ENCODE measurements at regions of chr2 and their contacts with region 1.

Region 1: GRCh38 chr2:70964596-70965386 is 13.6 kb upstream of the ANKRD53 start:
- DNase-seq: peak; percentile 95
- H3K4me3 Mint-ChIP-seq: peak overlapping the region; percentile 90
- H3K27ac Mint-ChIP-seq: no peak overlapping the region
- H3K4me1 Mint-ChIP-seq: peaks cover 7% of the 10 kb centered on the region
- H3K27me3 Mint-ChIP-seq: peaks cover 37% of the 10 kb centered on the region

Region 2: DNA sequence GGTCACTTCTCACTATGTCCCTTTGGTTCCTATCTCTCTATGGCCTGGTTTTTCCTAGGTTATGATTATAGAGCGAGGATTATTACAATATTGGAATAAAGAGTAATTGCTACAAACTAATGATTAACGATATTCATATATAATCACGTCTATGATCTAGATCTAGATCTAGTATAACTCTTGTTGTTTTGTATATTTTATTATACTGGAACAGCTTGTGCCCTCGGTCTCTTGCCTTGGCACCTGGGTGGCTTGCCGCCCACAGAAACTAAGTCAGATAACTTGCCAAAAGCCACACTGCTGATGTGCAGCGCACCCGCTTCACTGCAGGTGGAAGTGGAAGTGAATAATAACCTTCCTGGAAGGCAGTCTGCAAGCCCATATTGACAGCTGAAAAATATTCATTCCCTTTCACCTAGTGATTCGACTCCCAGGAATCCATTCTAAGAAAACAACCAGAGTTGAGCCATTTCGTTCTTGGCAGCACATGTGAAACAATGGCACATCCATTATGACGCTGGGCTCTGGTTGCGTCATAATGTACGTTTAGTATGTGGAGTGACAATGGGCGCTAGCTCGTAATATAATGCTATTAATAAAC is 12.9 kb after region 1 on chr2:
- intact Hi-C with region 1: loop called (anchors 1 kb)
- DNase-seq: peak; percentile 73
- H3K4me3 Mint-ChIP-seq: peak overlapping the region; percentile 79
- H3K27ac Mint-ChIP-seq: peak overlapping the region; percentile 54
- H3K4me1 Mint-ChIP-seq: peaks cover 12% of the 10 kb centered on the region
- H3K27me3 Mint-ChIP-seq: peaks cover 21% of the 10 kb centered on the region

Region 3: DNA sequence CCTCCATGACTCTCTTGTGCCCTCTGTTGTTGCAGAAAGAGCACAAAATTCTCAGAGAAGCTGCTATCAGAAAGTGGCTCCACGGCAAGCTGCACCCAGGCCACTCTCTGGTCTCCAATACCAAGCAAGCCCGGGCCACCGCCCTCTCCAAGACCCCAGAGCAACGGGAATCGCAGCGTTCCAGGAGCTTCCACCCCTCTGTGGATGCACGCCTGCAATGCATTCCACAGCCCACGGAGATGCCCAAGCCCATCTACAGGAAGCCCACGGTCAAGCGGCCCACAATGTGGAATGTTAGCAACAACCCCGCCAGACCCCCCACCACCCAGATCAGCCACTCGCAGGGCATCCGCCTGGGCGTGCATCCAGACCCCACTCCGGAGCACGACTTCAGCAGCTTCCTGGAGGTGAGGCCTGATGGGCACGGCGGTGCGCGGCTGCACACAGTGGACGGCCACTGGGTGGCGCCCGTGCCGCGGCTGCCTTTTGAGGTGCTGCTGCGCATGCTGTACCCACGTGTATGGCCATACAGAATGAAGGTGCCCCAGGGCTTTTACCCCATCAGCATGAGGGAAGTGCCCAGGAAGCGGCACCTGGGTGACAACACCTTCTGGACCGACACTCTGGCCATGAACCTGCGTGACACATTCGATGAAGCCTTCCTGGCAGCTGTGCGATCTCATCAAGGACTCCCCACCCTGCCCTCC is 19.9 kb after region 1 on chr2:
- intact Hi-C with region 1: loop called (anchors 2 kb)
- DNase-seq: peak; percentile 95
- H3K4me3 Mint-ChIP-seq: peak overlapping the region; percentile 45
- H3K27ac Mint-ChIP-seq: no peak overlapping the region
- H3K4me1 Mint-ChIP-seq: peaks cover 12% of the 10 kb centered on the region
- H3K27me3 Mint-ChIP-seq: no peaks in the 10 kb centered on the region

Region 4: DNA sequence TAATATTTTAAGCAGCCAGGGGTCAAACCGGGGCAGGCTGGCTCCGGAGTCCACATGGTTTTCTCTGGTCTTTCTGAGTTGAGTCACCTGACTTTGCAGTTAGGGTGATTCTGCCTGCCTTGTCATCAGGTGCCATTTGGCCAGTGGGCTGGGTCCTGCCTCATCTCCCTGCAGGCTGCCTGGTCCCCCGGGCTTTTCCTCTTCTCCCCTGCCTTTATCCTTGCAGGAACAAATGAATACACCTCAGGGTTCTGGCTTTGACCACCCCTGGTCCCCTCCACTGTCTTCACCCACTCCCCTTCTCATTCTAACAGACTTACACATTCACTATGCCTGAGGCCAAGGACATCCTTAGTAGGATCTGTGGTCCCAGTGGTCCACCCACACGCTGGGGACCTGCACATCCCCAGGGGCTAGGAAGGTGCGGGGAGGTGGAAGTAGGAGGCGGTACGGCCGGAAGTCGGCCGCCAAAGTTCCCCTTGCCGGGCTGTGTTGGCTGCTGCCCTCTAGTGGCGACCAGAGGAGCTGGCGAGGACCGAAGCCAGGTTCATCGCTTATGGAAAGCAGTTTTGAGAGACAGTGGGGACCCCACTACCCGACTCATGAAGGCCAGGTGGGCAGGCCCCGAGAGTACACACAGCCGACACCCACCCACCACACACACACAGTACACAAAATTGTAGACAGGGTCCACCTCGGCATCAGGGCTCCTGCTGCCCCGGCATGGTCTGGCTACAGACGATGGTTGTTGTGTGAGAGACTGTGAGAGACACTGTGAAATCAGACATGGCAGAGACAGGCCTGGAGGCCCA is 36.2 kb after region 1 on chr2:
- intact Hi-C with region 1: loop called (anchors 1 kb)
- DNase-seq: peak; percentile 94
- H3K4me3 Mint-ChIP-seq: peak overlapping the region; percentile 76
- H3K27ac Mint-ChIP-seq: peak overlapping the region; percentile 83
- H3K4me1 Mint-ChIP-seq: peaks cover 19% of the 10 kb centered on the region
- H3K27me3 Mint-ChIP-seq: peaks cover 2% of the 10 kb centered on the region

Region 5: GRCh38 chr2:71122387-71123298 is 157.9 kb after region 1 on chr2:
- intact Hi-C with region 1: no loop called
- DNase-seq: no peak
- H3K4me3 Mint-ChIP-seq: no peak overlapping the region
- H3K27ac Mint-ChIP-seq: no peak overlapping the region
- H3K4me1 Mint-ChIP-seq: peaks cover 2% of the 10 kb centered on the region
- H3K27me3 Mint-ChIP-seq: no peaks in the 10 kb centered on the region

Region 6: DNA sequence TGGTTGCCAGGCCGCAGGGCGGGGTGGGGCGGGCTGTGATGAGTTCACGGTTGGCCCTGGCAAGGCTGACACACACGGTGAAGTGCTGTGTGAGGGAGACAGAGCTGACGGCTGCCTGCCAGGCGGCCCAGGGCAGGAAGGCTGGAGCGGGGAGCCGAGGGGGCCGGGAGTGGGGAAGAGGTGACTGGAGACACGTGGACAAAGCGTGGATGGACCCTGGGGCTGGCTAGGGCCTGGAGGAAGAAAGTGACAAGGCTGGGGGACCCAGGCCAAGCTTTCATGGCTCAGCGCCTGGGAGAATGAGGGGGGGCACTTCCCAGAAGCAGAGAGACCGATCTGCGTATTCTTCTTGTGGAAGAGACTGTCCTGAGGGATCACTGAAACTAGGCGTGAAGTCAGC is 611.8 kb after region 1 on chr2:
- intact Hi-C with region 1: no loop called
- DNase-seq: no peak
- H3K4me3 Mint-ChIP-seq: no peak overlapping the region
- H3K27ac Mint-ChIP-seq: no peak overlapping the region
- H3K4me1 Mint-ChIP-seq: no peaks in the 10 kb centered on the region
- H3K27me3 Mint-ChIP-seq: no peaks in the 10 kb centered on the region